CD4-positive, alpha-beta T cell (primary cell): ENCODE measurements at regions of chr4 and their contacts with region 1.

Region 1: DNA sequence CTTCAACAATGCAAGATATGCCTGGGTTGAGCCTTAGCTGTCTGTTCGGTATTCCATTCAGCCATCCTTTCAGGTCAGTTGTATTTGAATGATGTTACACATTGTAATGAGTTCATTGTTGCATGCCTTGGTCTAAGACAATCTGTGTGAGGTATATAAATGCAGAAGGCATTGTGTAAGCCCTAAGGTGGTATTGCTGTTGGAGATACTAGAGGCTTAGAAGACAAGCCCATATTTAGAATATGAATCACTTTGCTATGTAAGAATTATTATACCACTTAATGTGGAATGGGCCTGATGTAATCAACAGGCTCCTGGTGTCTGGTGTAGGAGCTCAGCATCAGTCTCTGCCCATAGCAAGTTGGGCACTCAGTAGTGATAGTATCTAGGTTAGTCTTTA is 473.4 kb upstream of the GNPDA2 start:
- DNase-seq: no peak
- ATAC-seq: no peak
- H3K4me3 ChIP-seq: no peak overlapping the region
- H3K4me3 Mint-ChIP-seq: no peak overlapping the region
- H3K27ac ChIP-seq: no peak overlapping the region
- H3K27ac Mint-ChIP-seq: no peak overlapping the region
- H3K4me1 ChIP-seq: no peaks in the 10 kb centered on the region
- H3K4me1 Mint-ChIP-seq: no peaks in the 10 kb centered on the region
- H3K27me3 ChIP-seq: no peaks in the 10 kb centered on the region
- H3K27me3 Mint-ChIP-seq: no peaks in the 10 kb centered on the region
- CTCF ChIP-seq: no peak

Region 2: DNA sequence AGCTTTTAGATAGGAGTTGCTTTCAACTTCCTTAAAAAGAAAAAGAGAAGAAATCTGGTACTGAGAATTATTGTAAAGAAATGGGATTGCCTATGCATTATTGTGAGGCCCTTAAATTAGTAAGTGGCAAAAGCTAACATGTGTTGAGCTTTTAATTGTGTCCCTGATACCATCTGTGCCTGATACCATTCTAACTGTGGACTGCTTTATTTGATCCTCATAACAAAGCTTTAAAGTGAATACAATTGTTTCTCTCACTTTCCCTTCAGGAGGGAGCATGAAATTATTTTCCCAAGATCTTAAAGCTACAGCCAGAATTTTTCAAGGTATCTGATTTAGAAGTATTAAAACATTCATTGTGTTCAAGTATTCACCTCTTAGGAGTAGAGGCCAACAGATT is 761.0 kb before region 1 on chr4:
- CTCF ChIA-PET with region 1: no interaction called
- POLR2A ChIA-PET with region 1: no interaction called
- intact Hi-C with region 1: no loop called
- DNase-seq: no peak
- ATAC-seq: no peak
- H3K4me3 ChIP-seq: no peak overlapping the region
- H3K4me3 Mint-ChIP-seq: no peak overlapping the region
- H3K27ac ChIP-seq: no peak overlapping the region
- H3K27ac Mint-ChIP-seq: no peak overlapping the region
- H3K4me1 ChIP-seq: no peaks in the 10 kb centered on the region
- H3K4me1 Mint-ChIP-seq: no peaks in the 10 kb centered on the region
- H3K27me3 ChIP-seq: no peaks in the 10 kb centered on the region
- H3K27me3 Mint-ChIP-seq: peaks cover 15% of the 10 kb centered on the region
- CTCF ChIP-seq: no peak

Region 3: DNA sequence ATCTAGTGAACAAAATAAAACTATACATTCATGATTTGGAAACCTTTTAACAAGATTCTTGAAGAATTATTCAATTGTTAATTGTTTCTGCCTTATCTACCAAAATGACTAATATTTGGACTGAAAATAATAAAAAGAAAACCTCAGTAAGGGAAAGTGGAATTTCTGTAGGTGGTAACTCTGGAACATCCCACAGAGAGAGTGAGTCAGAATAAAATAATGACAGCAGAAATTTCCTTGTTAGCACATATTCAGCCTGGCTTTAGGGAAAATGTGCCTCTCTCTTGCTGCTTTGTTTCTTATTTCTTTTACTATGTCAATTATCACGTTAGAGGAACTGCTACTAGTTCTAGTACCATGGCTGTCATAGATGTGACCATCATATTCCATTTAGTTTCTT is 51.9 kb before region 1 on chr4:
- CTCF ChIA-PET with region 1: no interaction called
- POLR2A ChIA-PET with region 1: no interaction called
- intact Hi-C with region 1: loop called in 1 of 2 experiments (anchors 10 kb)
- DNase-seq: no peak
- ATAC-seq: no peak
- H3K4me3 ChIP-seq: no peak overlapping the region
- H3K4me3 Mint-ChIP-seq: no peak overlapping the region
- H3K27ac ChIP-seq: no peak overlapping the region
- H3K27ac Mint-ChIP-seq: no peak overlapping the region
- H3K4me1 ChIP-seq: no peaks in the 10 kb centered on the region
- H3K4me1 Mint-ChIP-seq: no peaks in the 10 kb centered on the region
- H3K27me3 ChIP-seq: no peaks in the 10 kb centered on the region
- H3K27me3 Mint-ChIP-seq: no peaks in the 10 kb centered on the region
- CTCF ChIP-seq: no peak

Region 4: DNA sequence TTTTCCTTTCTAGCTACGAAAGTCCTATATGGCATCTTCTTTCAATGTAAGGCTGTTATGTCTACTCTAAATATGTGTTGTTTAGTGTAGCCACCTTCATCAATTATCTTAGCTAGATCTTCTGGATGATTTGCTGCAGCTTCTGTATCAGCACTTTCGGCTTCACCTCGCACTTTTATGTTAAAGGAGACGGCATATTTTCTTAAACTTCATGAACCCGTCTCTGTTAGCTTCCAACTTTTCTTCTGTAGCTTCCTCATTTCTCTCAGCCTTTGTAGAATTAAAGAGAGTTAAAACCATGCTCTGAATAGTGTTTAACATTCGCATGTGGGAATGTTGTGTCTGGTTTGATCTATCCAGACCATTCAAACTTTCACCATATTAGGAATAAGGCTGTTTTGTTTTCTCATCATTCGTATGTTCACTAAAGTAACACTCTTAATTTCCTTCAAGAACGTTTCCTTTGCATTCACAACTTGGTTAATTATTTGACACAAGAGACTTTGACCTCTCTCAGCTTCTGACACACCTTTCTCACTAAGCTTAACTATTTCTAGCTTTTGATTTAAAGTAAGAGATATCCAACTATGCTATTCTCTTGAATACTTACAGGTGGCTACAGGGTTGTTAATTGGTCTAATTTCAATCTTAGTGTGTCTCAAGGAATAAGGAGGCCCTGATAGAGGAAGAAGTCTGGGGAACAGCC is 447.3 kb after region 1 on chr4:
- CTCF ChIA-PET with region 1: no interaction called
- POLR2A ChIA-PET with region 1: no interaction called
- intact Hi-C with region 1: no loop called
- DNase-seq: no peak
- ATAC-seq: no peak
- H3K4me3 ChIP-seq: no peak overlapping the region
- H3K4me3 Mint-ChIP-seq: no peak overlapping the region
- H3K27ac ChIP-seq: no peak overlapping the region
- H3K27ac Mint-ChIP-seq: no peak overlapping the region
- H3K4me1 ChIP-seq: no peaks in the 10 kb centered on the region
- H3K4me1 Mint-ChIP-seq: no peaks in the 10 kb centered on the region
- H3K27me3 ChIP-seq: no peaks in the 10 kb centered on the region
- H3K27me3 Mint-ChIP-seq: no peaks in the 10 kb centered on the region
- CTCF ChIP-seq: no peak